GM13976 (cell line): ENCODE measurements at regions of chr10 and their contacts with region 1.

Region 1: DNA sequence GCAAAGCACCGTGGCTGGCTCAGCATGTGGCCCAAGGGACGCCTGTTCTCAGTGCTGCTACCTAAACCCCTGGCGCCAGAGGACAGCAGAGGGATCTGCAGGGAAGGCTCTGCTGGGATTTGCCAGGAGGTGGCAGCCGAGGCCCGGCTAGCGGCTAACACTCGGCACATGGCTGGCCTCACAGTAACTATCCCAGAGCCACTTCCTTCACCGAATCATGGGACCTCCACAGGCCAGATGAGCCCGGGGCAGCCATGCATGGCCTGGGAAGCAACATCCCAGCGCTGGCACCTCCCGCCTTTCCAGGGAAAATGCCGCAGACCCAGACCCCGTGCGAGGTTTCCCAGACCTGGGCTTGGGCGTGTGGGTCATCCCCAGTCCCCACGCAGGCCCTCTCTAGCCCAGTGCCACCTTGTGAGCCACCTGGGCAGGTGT is 36.4 kb downstream of the DPYSL4 start:
- DNase-seq: peak; percentile 90
- CTCF ChIP-seq: peak; percentile 80

Region 2: GRCh38 chr10:132347211-132347930 is 124.2 kb after region 1 on chr10:
- in situ Hi-C with region 1: loop called (anchors 10 kb)
- DNase-seq: no peak
- CTCF ChIP-seq: no peak

Region 3: GRCh38 chr10:132452631-132453469 is 229.7 kb after region 1 on chr10:
- in situ Hi-C with region 1: loop called (anchors 10 kb)
- DNase-seq: peak; percentile 99
- CTCF ChIP-seq: peak; percentile 91

Region 4: GRCh38 chr10:132489087-132489703 is 266.0 kb after region 1 on chr10:
- in situ Hi-C with region 1: no loop called
- DNase-seq: no peak
- CTCF ChIP-seq: no peak

Region 5: DNA sequence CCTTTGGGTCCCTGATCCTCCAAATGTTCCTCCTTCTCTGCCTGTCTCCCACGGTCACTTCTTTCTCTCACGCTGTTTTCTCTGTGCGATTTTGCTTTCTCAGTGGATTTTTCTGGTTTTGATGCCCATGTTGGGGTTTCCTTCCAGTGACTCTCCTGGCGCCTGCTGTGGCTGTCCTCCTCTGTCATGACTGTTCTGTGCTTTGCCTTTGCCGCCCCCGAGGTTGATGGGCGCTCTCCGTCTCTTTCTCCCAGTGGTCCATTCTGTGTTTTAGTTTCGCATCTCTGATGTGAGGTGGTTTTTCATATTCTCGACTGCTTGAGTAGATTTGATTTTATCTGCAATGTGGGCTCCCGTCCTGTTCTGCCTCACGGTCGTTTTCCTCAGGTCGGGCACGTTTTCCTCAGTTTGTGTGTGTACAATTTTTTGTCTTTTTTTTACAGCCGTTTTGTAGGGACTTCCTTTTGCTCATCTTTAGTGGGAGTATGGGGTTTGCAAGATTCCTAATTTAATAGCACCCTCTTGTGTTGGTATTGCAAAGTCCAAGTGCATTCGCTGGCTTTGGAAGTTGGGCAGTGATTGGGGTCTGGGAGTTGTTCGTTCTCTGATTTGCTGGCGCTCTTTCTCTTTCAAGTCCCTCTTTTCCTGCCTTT is 414.4 kb after region 1 on chr10:
- in situ Hi-C with region 1: loop called (anchors 25 kb)
- DNase-seq: peak; percentile 84
- CTCF ChIP-seq: peak; percentile 64